Activated naive CD4-positive, alpha-beta T cell treated with anti-CD3 and anti-CD28 coated beads for 36 hours (primary cell): ENCODE measurements at regions of chr12 and their contacts with region 1.

Region 1: DNA sequence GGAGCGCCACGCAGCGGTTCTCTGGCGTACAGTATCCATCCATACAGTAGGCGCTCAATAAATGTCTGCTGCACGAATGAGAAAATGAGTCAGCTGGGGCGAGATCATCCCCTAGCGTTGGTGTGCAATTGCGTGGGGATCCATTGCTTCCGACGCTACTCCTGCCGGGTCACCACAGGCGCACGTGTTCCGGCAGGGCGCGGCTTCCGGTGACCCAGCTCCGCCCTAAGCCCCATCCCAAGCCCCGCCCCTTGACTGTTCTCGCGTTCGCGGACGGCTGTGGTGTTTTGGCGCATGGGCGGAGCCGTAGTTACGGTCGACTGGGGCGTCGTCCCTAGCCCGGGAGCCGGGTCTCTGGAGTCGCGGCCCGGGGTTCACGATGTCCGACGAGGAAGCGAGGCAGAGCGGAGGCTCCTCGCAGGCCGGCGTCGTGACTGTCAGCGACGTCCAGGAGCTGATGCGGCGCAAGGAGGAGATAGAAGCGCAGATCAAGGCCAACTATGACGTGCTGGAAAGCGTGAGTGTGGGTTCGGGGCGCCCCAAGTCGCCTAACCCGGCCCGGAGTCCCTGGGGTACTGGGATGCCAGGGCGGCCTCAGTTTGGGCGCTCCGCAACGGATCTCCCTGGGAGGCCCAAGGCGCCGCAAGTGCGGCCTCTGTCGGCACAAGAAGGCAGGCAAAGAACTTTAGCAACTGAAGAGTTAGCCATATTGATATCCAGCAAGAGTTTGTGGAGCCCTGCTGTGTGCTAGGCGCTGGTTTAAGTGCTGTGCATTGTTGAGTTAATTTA is at the start of gene PSMD9:
- DNase-seq: peak; percentile 99
- H3K4me3 Mint-ChIP-seq: peak within 1 kb of the TSS; percentile 98
- H3K27ac Mint-ChIP-seq: peak within 1 kb of the TSS; percentile 94
- H3K4me1 Mint-ChIP-seq: peaks cover 37% of the 10 kb centered on the region
- H3K27me3 Mint-ChIP-seq: no peaks in the 10 kb centered on the region
- total RNA-seq, gene PSMD9: 56.6 to 60.6 TPM

Region 2: GRCh38 chr12:121399391-121400331 is 489.0 kb before region 1 on chr12 and contains the start of gene RNF34:
- CTCF ChIA-PET with region 1: no interaction called
- intact Hi-C with region 1: loop called (anchors 2 kb)
- DNase-seq: peak; percentile 99
- H3K4me3 Mint-ChIP-seq: peak within 1 kb of the TSS; percentile 87
- H3K27ac Mint-ChIP-seq: peak within 1 kb of the TSS; percentile 93
- H3K4me1 Mint-ChIP-seq: peaks cover 32% of the 10 kb centered on the region
- H3K27me3 Mint-ChIP-seq: no peaks in the 10 kb centered on the region
- total RNA-seq, gene RNF34: 54.1 to 57.0 TPM

Region 3: GRCh38 chr12:121688966-121689365 is 199.7 kb before region 1 on chr12:
- CTCF ChIA-PET with region 1: interaction called, 5 read pairs
- intact Hi-C with region 1: loop called (anchors 1 kb)
- DNase-seq: no peak
- H3K4me3 Mint-ChIP-seq: no peak overlapping the region
- H3K27ac Mint-ChIP-seq: no peak overlapping the region
- H3K4me1 Mint-ChIP-seq: peaks cover 6% of the 10 kb centered on the region
- H3K27me3 Mint-ChIP-seq: no peaks in the 10 kb centered on the region

Region 4: GRCh38 chr12:121773011-121773777 is 115.5 kb before region 1 on chr12:
- CTCF ChIA-PET with region 1: interaction called, 4 read pairs
- intact Hi-C with region 1: loop called (anchors 1 kb)
- DNase-seq: peak; percentile 83
- H3K4me3 Mint-ChIP-seq: no peak overlapping the region
- H3K27ac Mint-ChIP-seq: peak overlapping the region; percentile 61
- H3K4me1 Mint-ChIP-seq: peaks cover 6% of the 10 kb centered on the region
- H3K27me3 Mint-ChIP-seq: no peaks in the 10 kb centered on the region

Region 5: GRCh38 chr12:121839106-121839992 is 49.3 kb before region 1 on chr12:
- CTCF ChIA-PET with region 1: interaction called, 10 read pairs
- intact Hi-C with region 1: loop called (anchors 1 kb)
- DNase-seq: peak; percentile 100
- H3K4me3 Mint-ChIP-seq: peak overlapping the region; percentile 97
- H3K27ac Mint-ChIP-seq: peak overlapping the region; percentile 88
- H3K4me1 Mint-ChIP-seq: peaks cover 11% of the 10 kb centered on the region
- H3K27me3 Mint-ChIP-seq: no peaks in the 10 kb centered on the region

Region 6: DNA sequence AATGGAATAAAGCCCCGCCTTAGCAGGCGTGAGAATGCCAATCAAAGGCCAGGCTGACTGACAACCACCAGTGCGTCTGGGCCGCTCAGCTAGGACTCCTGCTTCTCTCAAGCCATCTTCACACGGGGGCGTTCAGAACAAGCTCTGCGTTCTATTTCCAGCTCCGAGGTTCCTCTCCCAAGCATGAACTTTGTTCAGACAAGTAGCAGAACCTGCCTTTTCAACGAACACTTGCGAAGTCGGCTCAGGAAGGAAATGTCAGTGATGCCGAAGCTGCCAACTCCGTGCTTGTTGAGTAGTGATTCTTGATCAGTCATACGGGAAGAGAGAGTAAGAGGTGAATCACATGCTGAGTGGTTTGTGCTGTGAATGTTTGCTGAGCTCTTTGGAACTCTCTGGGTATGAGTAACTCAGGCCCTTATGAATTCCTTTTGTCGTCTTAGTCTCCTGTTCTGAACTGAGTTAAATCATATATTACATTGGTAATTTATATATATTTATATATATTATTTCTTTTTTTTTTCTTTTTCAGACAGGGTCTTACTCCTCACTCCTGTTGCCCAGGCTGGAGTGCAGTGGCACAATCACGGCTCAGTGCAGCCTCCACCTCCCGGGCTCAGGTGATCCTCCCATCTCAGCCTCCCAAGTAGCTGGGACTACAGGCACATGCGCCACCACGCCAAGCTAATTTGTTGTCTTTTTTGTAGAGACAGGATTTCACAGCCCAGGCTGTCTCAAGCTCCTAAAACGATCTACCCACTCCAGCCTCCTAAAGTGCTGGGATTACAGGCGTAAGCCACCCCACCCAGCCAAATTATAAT is 103.6 kb after region 1 on chr12:
- CTCF ChIA-PET with region 1: no interaction called
- intact Hi-C with region 1: loop called (anchors 1 kb)
- DNase-seq: peak; percentile 89
- H3K4me3 Mint-ChIP-seq: peak overlapping the region; percentile 43
- H3K27ac Mint-ChIP-seq: peak overlapping the region; percentile 87
- H3K4me1 Mint-ChIP-seq: peaks cover 20% of the 10 kb centered on the region
- H3K27me3 Mint-ChIP-seq: no peaks in the 10 kb centered on the region